ENCODE measurements at regions of chr5 and their contacts with region 1.

Region 1: GRCh38 chr5:174935854-174936474 is 211.6 kb downstream of the MSX2 start:
- DNase-seq: peak; percentile 72
- H3K4me3 ChIP-seq: no peak overlapping the region
- H3K27ac ChIP-seq: no peak overlapping the region
- H3K4me1 ChIP-seq: no peaks in the 10 kb centered on the region
- H3K27me3 ChIP-seq: no peaks in the 10 kb centered on the region
- CTCF ChIP-seq: peak; percentile 49 to 84 (median 62)
- EP300 ChIP-seq: no peak
- POLR2A ChIP-seq: no peak

Region 2: GRCh38 chr5:174418928-174419796 is 516.8 kb before region 1 on chr5:
- intact Hi-C with region 1: loop called (anchors 2 kb)
- DNase-seq: peak; percentile 89
- H3K4me3 ChIP-seq: peak overlapping the region in 1 of 4 donors; percentile 10
- H3K27ac ChIP-seq: no peak overlapping the region
- H3K4me1 ChIP-seq: peaks cover 0 to 8% (median 6%) of the 10 kb centered on the region in 4 donors
- H3K27me3 ChIP-seq: peaks cover 0 to 34% (median 5%) of the 10 kb centered on the region in 3 donors
- CTCF ChIP-seq: peak; percentile 28 to 84 (median 68)
- EP300 ChIP-seq: no peak
- POLR2A ChIP-seq: no peak

Region 3: DNA sequence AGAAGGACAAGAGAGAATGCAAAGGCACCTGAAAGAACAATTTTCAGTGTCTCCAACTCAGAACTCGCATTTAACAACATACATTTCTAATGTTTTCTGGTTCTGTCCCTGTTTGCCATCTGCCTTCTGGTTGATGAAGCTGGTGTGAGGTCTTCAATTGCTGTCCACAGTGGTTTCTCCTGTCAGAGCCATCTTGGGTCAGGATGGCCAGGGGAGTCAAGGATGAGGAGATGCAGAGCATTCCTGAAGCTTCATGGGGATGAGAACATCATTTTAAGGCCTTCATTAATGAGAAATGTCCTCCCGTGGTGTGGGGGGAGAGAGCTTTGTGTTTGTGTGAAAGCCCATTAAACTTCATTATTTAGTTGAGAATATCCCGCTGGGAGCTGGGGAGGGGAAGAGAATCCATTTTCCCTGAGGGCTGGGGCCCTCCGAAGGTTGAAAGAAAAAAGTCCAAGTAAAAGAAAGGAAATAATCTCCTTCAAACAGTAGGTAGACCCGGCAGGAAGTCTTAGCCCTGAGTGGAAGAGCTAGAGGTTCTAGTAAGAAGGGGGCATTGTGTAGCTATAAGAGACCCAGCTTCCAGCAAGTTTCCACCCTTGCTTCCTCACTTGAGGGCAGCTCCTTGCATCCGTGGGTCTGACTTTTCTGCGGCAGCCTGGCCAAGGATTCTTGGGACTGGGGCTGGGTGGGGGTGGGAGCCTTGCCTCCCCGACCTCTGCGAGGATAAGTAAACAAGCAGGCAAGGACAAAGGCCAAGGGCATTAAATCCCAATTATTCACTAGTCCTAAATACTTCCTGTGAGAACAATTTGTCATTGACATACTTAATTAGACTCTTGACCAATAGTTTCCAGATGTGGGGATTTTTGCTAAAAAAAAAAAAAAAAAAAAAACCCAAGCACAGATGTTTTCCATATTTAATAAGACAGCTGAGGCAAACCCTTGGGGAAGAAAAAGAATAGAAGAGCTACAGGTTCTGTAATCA is 92.4 kb before region 1 on chr5:
- intact Hi-C with region 1: loop called (anchors 5 kb)
- DNase-seq: peak; percentile 67
- H3K4me3 ChIP-seq: no peak overlapping the region
- H3K27ac ChIP-seq: peak overlapping the region in 3 of 4 donors; percentile 15 to 56 (median 22)
- H3K4me1 ChIP-seq: peaks cover 0 to 44% (median 17%) of the 10 kb centered on the region in 4 donors
- H3K27me3 ChIP-seq: no peaks in the 10 kb centered on the region
- CTCF ChIP-seq: no peak
- EP300 ChIP-seq: no peak
- POLR2A ChIP-seq: no peak

Region 4: GRCh38 chr5:174910245-174910737 is 25.7 kb before region 1 on chr5:
- intact Hi-C with region 1: loop called (anchors 2 kb)
- DNase-seq: peak; percentile 76
- H3K4me3 ChIP-seq: peak overlapping the region in 1 of 4 donors; percentile 1
- H3K27ac ChIP-seq: no peak overlapping the region
- H3K4me1 ChIP-seq: peaks cover 0 to 2% (median 0%) of the 10 kb centered on the region in 4 donors
- H3K27me3 ChIP-seq: peaks cover 0 to 3% (median 0%) of the 10 kb centered on the region in 3 donors
- CTCF ChIP-seq: peak; percentile 17 to 84 (median 69)
- EP300 ChIP-seq: no peak
- POLR2A ChIP-seq: no peak

Region 5: GRCh38 chr5:175025077-175025476 is 89.1 kb after region 1 on chr5:
- intact Hi-C with region 1: no loop called
- DNase-seq: no peak
- H3K4me3 ChIP-seq: no peak overlapping the region
- H3K27ac ChIP-seq: no peak overlapping the region
- H3K4me1 ChIP-seq: no peaks in the 10 kb centered on the region
- H3K27me3 ChIP-seq: no peaks in the 10 kb centered on the region
- CTCF ChIP-seq: no peak
- EP300 ChIP-seq: no peak
- POLR2A ChIP-seq: no peak